Brain microvascular endothelial cell (primary cell): ENCODE measurements at regions of chr1 and their contacts with region 1.

Region 1: GRCh38 chr1:52141513-52142219 is at the start of gene ZFYVE9:
- DNase-seq: peak; percentile 36
- H3K4me3 ChIP-seq: peak within 1 kb of the TSS; percentile 79
- H3K27ac ChIP-seq: peak within 1 kb of the TSS; percentile 82
- H3K27me3 ChIP-seq: no peaks in the 10 kb centered on the region
- CTCF ChIP-seq: peak; percentile 51

Region 2: DNA sequence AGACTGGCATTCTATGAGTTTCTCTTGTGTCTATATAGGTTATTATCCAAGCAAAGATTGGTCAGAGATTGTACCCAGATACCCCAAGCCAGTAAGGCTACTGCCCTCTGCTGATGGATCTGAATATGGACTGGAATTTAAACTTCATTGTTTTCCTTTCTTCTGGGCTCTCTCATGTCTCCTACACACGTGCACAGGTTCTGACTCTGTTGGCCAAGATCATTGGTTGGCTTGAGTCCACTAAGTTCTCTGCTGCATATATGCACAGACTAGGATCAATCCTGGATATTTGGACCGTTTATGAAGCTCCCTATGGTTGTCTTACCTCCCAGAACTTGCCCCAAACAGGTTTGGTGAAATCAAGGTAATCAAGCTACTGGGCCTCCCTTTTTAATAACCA is 154.7 kb after region 1 on chr1:
- in situ Hi-C with region 1: loop called (anchors 25 kb)
- DNase-seq: peak; percentile 46
- H3K4me3 ChIP-seq: no peak overlapping the region
- H3K27ac ChIP-seq: no peak overlapping the region
- H3K27me3 ChIP-seq: no peaks in the 10 kb centered on the region
- CTCF ChIP-seq: peak; percentile 81